ENCODE measurements at regions of chr6 and their contacts with region 1.

Region 1: DNA sequence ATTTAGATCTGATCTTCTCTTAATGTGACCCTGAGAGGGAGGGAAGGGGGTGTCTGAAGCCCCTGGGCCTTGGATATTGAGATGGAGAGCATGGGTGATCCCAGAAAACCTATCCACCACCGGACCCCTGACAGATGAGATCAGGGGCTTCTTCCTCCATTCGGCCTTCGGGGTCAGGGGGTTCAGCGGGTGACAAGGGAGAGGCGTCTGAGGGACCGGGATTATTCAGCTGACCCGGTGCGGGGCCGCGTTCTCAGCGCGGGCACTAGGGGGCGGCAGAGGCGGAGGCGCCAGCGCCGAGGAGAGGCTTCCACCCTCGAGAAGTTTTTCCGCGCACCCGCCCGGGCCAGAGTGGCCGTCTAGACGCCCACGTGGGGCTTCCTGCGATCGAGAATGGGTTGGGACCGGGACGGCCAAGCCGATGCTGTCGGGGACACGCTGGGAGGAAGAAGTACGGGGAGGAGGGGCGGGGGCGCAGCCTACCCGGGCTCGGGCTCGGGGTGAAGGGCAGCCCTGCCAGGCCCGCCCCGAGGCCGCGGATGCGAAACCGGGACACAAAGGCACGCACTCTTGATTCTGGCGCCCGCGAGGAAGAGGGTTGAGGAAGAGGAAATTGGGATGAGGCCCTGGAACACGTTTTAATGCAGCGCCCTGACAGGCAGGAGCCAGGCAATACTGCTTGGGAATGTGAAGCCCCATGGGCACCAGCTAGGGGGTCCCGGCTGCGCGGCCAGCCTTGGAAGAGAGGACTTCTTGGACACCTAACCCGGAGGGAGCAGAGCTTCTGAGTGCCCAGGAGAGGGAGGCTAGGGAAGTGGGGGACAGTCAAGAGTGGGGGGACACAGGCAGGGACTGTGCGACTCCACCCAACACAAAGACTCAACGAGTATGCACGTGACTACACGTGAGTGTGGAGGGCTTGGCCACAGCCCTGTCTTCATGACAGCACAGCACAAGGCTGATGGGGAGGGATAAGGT is 30.6 kb downstream of the COL11A2 start:
- DNase-seq: peak; percentile 81
- H3K4me3 ChIP-seq: peak overlapping the region; percentile 54
- H3K27ac ChIP-seq: peak overlapping the region; percentile 40
- H3K4me1 ChIP-seq: peaks cover 7% of the 10 kb centered on the region
- H3K27me3 ChIP-seq: no peaks in the 10 kb centered on the region
- CTCF ChIP-seq: peak; percentile 96

Region 2: GRCh38 chr6:32825966-32826365 is 335.7 kb before region 1 on chr6:
- CTCF ChIA-PET with region 1: no interaction called
- POLR2A ChIA-PET with region 1: no interaction called
- intact Hi-C with region 1: no loop called
- DNase-seq: peak; percentile 40
- H3K4me3 ChIP-seq: no peak overlapping the region
- H3K27ac ChIP-seq: no peak overlapping the region
- H3K4me1 ChIP-seq: no peaks in the 10 kb centered on the region
- H3K27me3 ChIP-seq: no peaks in the 10 kb centered on the region
- CTCF ChIP-seq: peak; percentile 49

Region 3: DNA sequence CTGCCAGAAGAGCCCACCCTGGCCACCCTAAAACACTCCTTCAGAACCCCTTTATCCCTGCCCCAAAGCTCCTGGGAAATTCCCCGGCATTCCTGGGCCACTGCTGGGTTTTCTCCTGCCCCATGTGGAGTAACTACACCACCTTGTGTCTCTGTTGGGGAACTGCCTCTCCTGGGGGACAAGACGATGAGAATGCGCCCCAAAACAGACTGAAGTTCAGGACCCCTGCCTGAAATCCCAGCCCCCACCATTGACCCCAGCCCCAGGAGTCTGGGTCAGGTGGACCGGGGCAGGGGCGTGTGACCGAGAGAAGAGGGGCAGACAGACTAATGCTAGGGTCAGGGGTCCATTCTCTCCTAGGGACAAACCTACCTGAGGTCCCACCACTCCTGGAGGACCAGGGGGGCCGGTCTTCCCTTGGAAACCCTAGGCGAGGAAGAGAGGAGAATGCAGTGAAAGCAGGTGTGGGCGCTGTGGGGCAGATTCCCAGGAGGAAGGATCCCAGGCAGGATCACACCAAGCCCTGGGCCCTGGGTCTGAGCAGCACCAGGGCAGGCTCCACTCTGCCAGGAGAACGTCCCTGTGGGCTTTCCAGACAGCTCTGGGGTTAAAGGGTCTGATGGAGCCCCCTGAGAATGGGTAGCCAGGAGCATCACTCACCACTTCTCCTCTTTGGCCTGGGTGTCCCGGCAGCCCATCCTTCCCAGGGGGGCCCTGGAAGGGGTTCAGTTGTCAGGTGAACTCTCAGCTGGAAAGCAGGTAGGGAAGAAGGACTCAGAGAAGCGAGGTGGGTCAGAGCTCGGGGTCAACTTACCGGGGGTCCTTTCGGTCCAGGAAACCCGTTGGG is 11.3 kb after region 1 on chr6:
- CTCF ChIA-PET with region 1: interaction called, 13 read pairs
- POLR2A ChIA-PET with region 1: no interaction called
- intact Hi-C with region 1: no loop called
- DNase-seq: peak; percentile 37
- H3K4me3 ChIP-seq: no peak overlapping the region
- H3K27ac ChIP-seq: no peak overlapping the region
- H3K4me1 ChIP-seq: no peaks in the 10 kb centered on the region
- H3K27me3 ChIP-seq: no peaks in the 10 kb centered on the region
- CTCF ChIP-seq: peak; percentile 59

Region 4: DNA sequence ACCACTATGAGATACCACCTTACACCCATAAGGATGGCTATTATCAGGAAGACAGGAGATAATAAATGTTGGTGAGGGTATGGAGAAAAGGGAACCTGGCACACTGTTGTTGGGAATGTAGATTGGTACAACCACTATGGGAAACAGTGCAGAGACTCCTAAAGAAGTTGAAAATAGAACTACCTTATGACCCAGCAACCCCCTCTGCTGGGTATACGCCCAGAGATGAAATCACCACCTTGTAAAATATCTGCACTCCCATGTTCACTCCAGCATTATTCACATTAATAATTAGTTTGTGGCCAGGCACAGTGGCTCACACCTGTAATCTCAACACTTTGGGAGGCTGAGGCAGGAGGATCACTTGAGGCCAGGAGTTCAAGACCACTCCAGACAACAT is 319.5 kb after region 1 on chr6:
- CTCF ChIA-PET with region 1: no interaction called
- POLR2A ChIA-PET with region 1: no interaction called
- intact Hi-C with region 1: no loop called
- DNase-seq: no peak
- H3K4me3 ChIP-seq: no peak overlapping the region
- H3K27ac ChIP-seq: no peak overlapping the region
- H3K4me1 ChIP-seq: no peaks in the 10 kb centered on the region
- H3K27me3 ChIP-seq: peaks cover 3% of the 10 kb centered on the region
- CTCF ChIP-seq: no peak

Measured in A673 (cell line).